ENCODE measurements at regions of chr10 and their contacts with region 1.

Region 1: DNA sequence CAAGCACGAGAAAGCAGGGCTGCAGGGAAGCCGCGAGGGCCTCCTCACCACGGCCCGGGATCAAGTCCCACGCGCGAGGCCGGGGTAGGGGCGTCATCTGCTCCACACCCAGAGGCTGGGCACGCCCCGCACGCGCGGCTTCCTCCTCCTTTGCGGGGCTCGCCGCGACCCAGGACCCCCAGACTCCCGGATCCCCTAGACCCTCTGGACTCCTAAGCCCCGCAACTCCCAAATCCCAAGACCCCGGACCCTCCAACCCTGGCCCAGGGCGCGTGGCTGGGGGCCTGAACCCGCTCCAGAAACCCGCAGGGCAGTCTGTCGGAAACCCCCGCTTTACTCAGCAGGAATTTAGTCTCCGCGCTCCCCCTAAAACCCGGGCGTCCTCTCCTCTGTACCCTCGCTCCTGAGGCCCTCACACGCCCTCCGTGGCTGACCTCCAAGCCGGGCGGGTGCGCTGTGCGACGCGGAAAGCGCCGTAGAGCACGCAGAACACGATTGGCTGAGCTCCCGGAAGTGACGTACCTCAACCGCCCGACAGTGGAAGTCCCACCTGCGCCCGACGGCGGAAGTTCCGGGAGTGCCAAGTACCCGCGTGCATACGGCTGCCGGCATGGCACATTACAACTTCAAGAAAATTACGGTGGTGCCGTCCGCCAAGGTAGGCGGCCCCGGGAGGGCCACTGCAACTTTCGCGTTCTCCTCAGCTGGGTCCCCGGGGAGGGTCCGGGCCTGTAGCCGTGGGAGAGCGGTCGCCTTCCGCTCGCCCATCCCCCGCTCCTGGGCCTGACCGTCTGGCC is at the start of gene GTPBP4:
- DNase-seq: peak; percentile 93 to 99 (median 96)
- ATAC-seq: peak; percentile 97
- H3K4me3 ChIP-seq: peak within 1 kb of the TSS; percentile 94
- H3K27ac ChIP-seq: peak within 1 kb of the TSS; percentile 93
- H3K4me1 ChIP-seq: peaks cover 22 to 31% of the 10 kb centered on the region in 2 experiments
- H3K27me3 ChIP-seq: no peaks in the 10 kb centered on the region
- CTCF ChIP-seq: peak; percentile 44 to 63 (median 54)
- EP300 ChIP-seq: peak; percentile 30
- POLR2A ChIP-seq: peak; percentile 92
- RAD21 ChIP-seq: no peak
- polyA plus RNA-seq, gene GTPBP4: 88.2 to 128 TPM

Region 2: DNA sequence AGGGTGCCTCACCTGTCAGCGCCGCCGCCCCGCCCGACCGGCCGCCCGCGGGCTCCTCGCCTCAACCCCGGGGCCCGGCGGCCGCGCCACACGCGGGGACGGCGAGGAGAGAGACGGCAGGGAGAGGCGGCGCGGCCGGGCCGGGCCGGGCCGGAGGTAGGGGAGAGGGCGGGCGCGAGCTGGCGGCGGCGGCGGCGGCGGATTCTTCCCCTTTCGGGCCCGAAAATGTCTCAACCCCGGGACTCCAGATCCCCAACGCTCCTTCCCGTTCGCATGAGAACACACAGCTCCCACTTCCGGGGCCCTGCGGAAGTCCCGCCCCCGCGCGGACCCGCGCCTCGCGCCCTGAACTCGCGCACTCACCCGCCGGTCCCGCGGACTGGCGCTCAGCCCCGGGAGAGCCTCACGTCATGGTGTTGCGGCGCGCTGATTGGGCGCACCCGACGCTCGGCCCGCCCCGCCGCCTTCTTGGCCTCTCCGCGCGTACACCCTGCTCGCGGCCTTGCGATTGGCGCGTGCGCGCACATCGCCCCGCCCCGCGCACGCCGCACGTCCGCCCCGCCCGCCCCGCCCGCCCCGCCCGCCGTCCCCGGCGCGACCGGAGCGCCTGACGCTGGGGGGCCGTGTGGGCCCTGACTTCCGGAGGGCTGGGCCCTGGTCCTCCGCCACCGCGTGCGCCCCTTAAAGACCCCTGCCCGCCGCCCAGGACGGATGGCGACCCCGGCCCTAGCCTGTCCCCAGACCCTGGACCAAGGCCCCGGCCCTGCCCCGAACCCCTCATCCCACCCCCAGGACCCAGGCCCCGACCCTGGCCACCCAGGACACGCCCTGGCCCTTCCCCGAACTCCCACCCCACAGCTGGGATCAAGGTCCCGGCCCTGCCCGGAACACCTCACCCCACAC is 56.4 kb before region 1 on chr10 and contains the start of gene LARP4B:
- CTCF ChIA-PET with region 1: no interaction called
- POLR2A ChIA-PET with region 1: interaction called, 4 read pairs
- in situ Hi-C with region 1: loop called (anchors 5 kb)
- intact Hi-C with region 1: loop called (anchors 5 kb)
- DNase-seq: peak; percentile 94 to 98 (median 97)
- ATAC-seq: peak; percentile 97
- H3K4me3 ChIP-seq: peak within 1 kb of the TSS; percentile 97
- H3K27ac ChIP-seq: peak within 1 kb of the TSS; percentile 85
- H3K4me1 ChIP-seq: peaks cover 18 to 21% of the 10 kb centered on the region in 2 experiments
- H3K27me3 ChIP-seq: no peaks in the 10 kb centered on the region
- CTCF ChIP-seq: no peak
- EP300 ChIP-seq: no peak
- POLR2A ChIP-seq: peak; percentile 75
- RAD21 ChIP-seq: no peak
- polyA plus RNA-seq, gene LARP4B: 11.8 to 21.0 TPM

Region 3: DNA sequence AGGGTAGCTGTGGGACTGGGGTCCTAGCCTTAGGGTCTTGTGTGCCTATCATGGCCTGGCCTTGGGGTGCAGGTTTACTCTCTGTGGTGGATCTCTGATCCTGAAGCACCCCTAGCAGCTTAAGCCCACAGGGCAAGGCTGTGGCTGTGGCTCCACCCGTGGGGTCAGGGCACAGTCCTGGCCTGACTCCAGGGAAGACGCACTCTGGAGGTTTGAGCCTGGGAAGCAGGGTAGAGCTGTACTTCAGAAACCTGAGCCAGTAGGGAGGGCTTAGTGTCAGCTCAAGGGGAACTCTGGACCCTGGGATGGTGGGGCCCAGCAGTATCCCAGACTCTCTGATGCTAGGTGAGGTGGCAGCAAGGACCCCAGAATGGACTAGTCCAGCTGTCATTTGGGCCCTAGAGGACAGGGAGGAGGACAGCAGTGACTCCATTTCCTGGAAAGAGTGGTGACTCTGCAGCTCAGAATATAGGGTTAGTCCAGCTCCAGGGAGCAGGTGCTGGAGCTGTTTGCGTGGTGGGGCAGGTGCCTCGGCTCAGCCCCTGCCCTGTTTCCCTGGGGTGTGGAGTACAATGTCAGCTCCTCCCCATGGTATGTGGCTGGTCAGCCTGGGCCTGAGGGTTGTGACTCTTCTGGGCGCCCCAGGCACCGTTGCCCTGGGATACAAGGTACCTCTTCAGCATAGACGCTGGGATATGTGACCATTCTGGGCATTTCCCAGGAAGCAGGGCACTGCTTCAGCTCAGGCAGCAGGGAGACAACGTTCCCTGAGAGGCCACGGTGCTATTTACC is 16.0 kb after region 1 on chr10:
- CTCF ChIA-PET with region 1: no interaction called
- POLR2A ChIA-PET with region 1: interaction called, 20 read pairs
- in situ Hi-C with region 1: no loop called
- intact Hi-C with region 1: no loop called
- DNase-seq: no peak
- ATAC-seq: no peak
- H3K4me3 ChIP-seq: no peak overlapping the region
- H3K27ac ChIP-seq: no peak overlapping the region
- H3K4me1 ChIP-seq: peaks cover 4 to 10% of the 10 kb centered on the region in 2 experiments; a peak in 4 of 5 replicates
- H3K27me3 ChIP-seq: no peaks in the 10 kb centered on the region
- CTCF ChIP-seq: no peak
- EP300 ChIP-seq: no peak
- POLR2A ChIP-seq: no peak
- RAD21 ChIP-seq: no peak